CD8-positive, alpha-beta T cell (primary cell): ENCODE measurements at regions of chr5 and their contacts with region 1.

Region 1: GRCh38 chr5:154276973-154277331 is 86.4 kb downstream of the GALNT10 start:
- DNase-seq: no peak
- ATAC-seq: no peak
- H3K4me3 ChIP-seq: no peak overlapping the region
- H3K4me3 Mint-ChIP-seq: no peak overlapping the region
- H3K27ac ChIP-seq: no peak overlapping the region
- H3K27ac Mint-ChIP-seq: no peak overlapping the region
- H3K4me1 ChIP-seq: peaks cover 14% of the 10 kb centered on the region
- H3K4me1 Mint-ChIP-seq: peaks cover 26% of the 10 kb centered on the region
- H3K27me3 ChIP-seq: no peaks in the 10 kb centered on the region
- H3K27me3 Mint-ChIP-seq: no peaks in the 10 kb centered on the region
- CTCF ChIP-seq: no peak

Region 2: GRCh38 chr5:154331924-154332323 is 55.0 kb after region 1 on chr5:
- CTCF ChIA-PET with region 1: no interaction called
- POLR2A ChIA-PET with region 1: no interaction called
- intact Hi-C with region 1: loop called in 1 of 2 experiments (anchors 1 kb)
- DNase-seq: no peak
- ATAC-seq: no peak
- H3K4me3 ChIP-seq: no peak overlapping the region
- H3K4me3 Mint-ChIP-seq: no peak overlapping the region
- H3K27ac ChIP-seq: no peak overlapping the region
- H3K27ac Mint-ChIP-seq: no peak overlapping the region
- H3K4me1 ChIP-seq: no peaks in the 10 kb centered on the region
- H3K4me1 Mint-ChIP-seq: no peaks in the 10 kb centered on the region
- H3K27me3 ChIP-seq: no peaks in the 10 kb centered on the region
- H3K27me3 Mint-ChIP-seq: no peaks in the 10 kb centered on the region
- CTCF ChIP-seq: no peak

Region 3: DNA sequence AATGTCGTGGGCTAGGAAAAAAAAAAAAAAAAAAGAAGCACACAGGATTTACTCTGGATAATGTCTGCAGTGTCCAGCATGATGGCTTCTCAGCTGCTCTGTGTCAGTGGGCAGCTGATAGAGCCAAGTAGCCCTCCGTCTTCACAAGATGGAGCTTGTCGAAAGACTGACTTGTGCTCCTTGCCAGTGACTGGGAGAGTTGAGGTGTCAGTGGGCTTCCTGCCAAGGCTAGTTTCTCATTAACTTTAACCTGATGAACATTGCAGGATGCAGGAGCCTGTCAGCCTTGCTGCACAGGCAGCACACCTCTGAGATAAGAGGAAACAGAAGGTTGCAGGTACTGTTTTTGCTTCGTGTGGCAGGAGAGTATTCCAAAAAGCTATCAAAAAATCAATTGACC is 1878.6 kb after region 1 on chr5:
- CTCF ChIA-PET with region 1: no interaction called
- POLR2A ChIA-PET with region 1: no interaction called
- intact Hi-C with region 1: no loop called
- DNase-seq: no peak
- ATAC-seq: no peak
- H3K4me3 ChIP-seq: no peak overlapping the region
- H3K4me3 Mint-ChIP-seq: no peak overlapping the region
- H3K27ac ChIP-seq: no peak overlapping the region
- H3K27ac Mint-ChIP-seq: no peak overlapping the region
- H3K4me1 ChIP-seq: no peaks in the 10 kb centered on the region
- H3K4me1 Mint-ChIP-seq: no peaks in the 10 kb centered on the region
- H3K27me3 ChIP-seq: no peaks in the 10 kb centered on the region
- H3K27me3 Mint-ChIP-seq: peaks cover 3% of the 10 kb centered on the region
- CTCF ChIP-seq: no peak